Adrenal gland (tissue), 19 donors: ENCODE measurements at regions of chr12 and their contacts with region 1.

Region 1: DNA sequence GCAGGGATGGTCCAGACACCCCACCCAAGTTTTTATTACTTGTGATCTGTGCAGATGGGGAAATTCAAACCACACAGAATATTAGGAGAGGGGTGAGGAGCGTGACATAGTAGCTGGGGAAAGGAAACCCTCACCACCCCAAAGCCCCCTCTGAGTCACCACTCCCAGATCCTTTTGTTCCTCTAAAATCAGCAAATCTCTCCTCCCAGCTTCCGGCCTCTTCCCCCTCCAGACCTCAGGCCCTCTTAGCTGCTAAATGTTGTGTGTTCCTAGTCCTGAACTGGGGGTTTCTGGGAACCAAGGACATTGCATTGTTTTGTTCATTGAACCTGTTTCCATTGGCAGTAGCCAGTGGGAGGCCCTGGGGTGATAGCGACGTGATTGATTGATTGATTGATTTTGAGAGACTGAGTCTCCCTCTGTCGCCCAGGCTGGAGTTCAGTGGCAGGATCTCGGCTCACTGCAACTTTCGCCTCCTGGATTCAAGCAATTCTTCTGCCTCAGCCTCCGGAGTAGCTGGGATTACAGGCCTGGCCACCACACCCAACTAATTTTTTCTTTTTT is 5.9 kb upstream of the ORAI1 start:
- DNase-seq: peak in 1 of 7 donors; percentile 19
- H3K4me3 ChIP-seq: no peak overlapping the region
- H3K27ac ChIP-seq: no peak overlapping the region
- H3K4me1 ChIP-seq: peaks cover 0 to 5% of the 10 kb centered on the region in 2 donors
- H3K27me3 ChIP-seq: no peaks in the 10 kb centered on the region
- CTCF ChIP-seq: no peak
- POLR2A ChIP-seq: no peak

Region 2: GRCh38 chr12:121550974-121551634 is 69.3 kb before region 1 on chr12:
- intact Hi-C with region 1: loop called (anchors 5 kb)
- DNase-seq: no peak
- H3K4me3 ChIP-seq: no peak overlapping the region
- H3K27ac ChIP-seq: no peak overlapping the region
- H3K4me1 ChIP-seq: no peaks in the 10 kb centered on the region
- H3K27me3 ChIP-seq: no peaks in the 10 kb centered on the region
- CTCF ChIP-seq: no peak
- POLR2A ChIP-seq: no peak

Region 3: GRCh38 chr12:121560392-121561008 is 59.9 kb before region 1 on chr12:
- intact Hi-C with region 1: loop called in 1 of 2 experiments (anchors 5 kb)
- DNase-seq: no peak
- H3K4me3 ChIP-seq: no peak overlapping the region
- H3K27ac ChIP-seq: no peak overlapping the region
- H3K4me1 ChIP-seq: no peaks in the 10 kb centered on the region
- H3K27me3 ChIP-seq: no peaks in the 10 kb centered on the region
- CTCF ChIP-seq: no peak
- POLR2A ChIP-seq: no peak

Region 4: GRCh38 chr12:121701667-121702277 is 81.4 kb after region 1 on chr12:
- intact Hi-C with region 1: no loop called
- DNase-seq: no peak
- H3K4me3 ChIP-seq: no peak overlapping the region
- H3K27ac ChIP-seq: no peak overlapping the region
- H3K4me1 ChIP-seq: no peaks in the 10 kb centered on the region
- H3K27me3 ChIP-seq: no peaks in the 10 kb centered on the region
- CTCF ChIP-seq: no peak
- POLR2A ChIP-seq: no peak

Region 5: GRCh38 chr12:121802846-121803630 is 182.6 kb after region 1 on chr12:
- intact Hi-C with region 1: no loop called
- DNase-seq: peak; percentile 88 to 97 (median 90)
- H3K4me3 ChIP-seq: peak overlapping the region; percentile 28 to 92 (median 56)
- H3K27ac ChIP-seq: peak overlapping the region; percentile 97 to 100 (median 100)
- H3K4me1 ChIP-seq: peaks cover 40 to 53% of the 10 kb centered on the region in 2 donors
- H3K27me3 ChIP-seq: no peaks in the 10 kb centered on the region
- CTCF ChIP-seq: no peak
- POLR2A ChIP-seq: peak; percentile 96 to 97